Breast epithelium (tissue), 4 donors: ENCODE measurements at regions of chr20 and their contacts with region 1.

Region 1: DNA sequence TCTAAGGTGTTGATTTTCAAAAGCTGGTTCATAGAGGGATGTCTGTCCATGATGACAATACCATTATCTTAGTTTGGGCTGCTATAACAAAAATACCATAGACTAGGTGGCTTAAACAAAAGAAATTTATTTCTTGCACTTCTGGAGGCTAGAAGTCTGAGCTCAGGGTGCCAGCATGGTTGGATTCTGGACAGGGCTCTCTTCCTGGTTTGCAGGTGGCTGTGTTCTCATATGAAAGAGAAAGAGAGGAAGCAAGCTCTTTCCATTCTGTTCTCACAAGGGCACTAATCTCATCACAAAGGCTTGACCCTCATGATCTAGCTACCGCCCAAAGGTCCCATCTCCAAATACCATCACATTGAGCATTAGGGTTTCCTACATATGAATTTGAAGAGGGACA is 144.5 kb upstream of the SLC24A3 start:
- DNase-seq: no peak
- H3K4me3 ChIP-seq: no peak overlapping the region
- H3K27ac ChIP-seq: no peak overlapping the region
- H3K4me1 ChIP-seq: no peaks in the 10 kb centered on the region
- H3K27me3 ChIP-seq: no peaks in the 10 kb centered on the region
- CTCF ChIP-seq: no peak
- POLR2A ChIP-seq: no peak

Region 2: GRCh38 chr20:19875331-19876221 is 807.6 kb after region 1 on chr20:
- intact Hi-C with region 1: loop called (anchors 10 kb)
- DNase-seq: no peak
- H3K4me3 ChIP-seq: no peak overlapping the region
- H3K27ac ChIP-seq: peak overlapping the region in 1 of 2 donors; percentile 46
- H3K4me1 ChIP-seq: no peaks in the 10 kb centered on the region
- H3K27me3 ChIP-seq: no peaks in the 10 kb centered on the region
- CTCF ChIP-seq: no peak
- POLR2A ChIP-seq: no peak

Region 3: DNA sequence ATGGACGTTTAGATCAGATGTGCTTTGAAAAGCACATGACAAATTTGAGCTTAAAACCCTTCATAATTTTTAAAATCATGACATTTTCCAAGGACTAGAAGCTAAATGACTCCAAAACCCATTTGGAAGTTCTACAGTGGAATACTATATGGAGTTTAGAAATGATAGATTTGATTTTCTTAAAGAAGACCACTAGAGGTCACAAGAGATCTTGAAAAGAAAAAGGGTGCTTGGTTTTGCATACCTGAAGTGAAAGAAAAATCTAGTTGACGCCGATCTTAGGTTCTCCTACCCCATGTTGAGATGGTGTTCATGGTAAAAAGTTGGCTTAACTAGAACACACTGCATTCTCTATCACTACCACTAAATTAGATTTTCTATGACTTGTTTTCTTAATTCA is 1015.8 kb after region 1 on chr20:
- intact Hi-C with region 1: no loop called
- DNase-seq: no peak
- H3K4me3 ChIP-seq: no peak overlapping the region
- H3K27ac ChIP-seq: no peak overlapping the region
- H3K4me1 ChIP-seq: no peaks in the 10 kb centered on the region
- H3K27me3 ChIP-seq: no peaks in the 10 kb centered on the region
- CTCF ChIP-seq: peak; percentile 36 to 61 (median 55)
- POLR2A ChIP-seq: no peak

Region 4: GRCh38 chr20:20102716-20103258 is 1034.8 kb after region 1 on chr20:
- intact Hi-C with region 1: loop called (anchors 10 kb)
- DNase-seq: no peak
- H3K4me3 ChIP-seq: no peak overlapping the region
- H3K27ac ChIP-seq: no peak overlapping the region
- H3K4me1 ChIP-seq: no peaks in the 10 kb centered on the region
- H3K27me3 ChIP-seq: no peaks in the 10 kb centered on the region
- CTCF ChIP-seq: no peak
- POLR2A ChIP-seq: no peak